ENCODE measurements at regions of chr5 and their contacts with region 1.

Region 1: GRCh38 chr5:174418928-174419796 is 305.2 kb upstream of the MSX2 start:
- DNase-seq: peak; percentile 87 to 93
- ATAC-seq: peak; percentile 82 to 89 (median 84)
- H3K4me3 ChIP-seq: peak overlapping the region; percentile 24
- H3K27ac ChIP-seq: no peak overlapping the region
- H3K4me1 ChIP-seq: peaks cover 8% of the 10 kb centered on the region
- H3K27me3 ChIP-seq: peaks cover 0 to 26% (median 4%) of the 10 kb centered on the region in 3 donors
- CTCF ChIP-seq: peak; percentile 89

Region 2: DNA sequence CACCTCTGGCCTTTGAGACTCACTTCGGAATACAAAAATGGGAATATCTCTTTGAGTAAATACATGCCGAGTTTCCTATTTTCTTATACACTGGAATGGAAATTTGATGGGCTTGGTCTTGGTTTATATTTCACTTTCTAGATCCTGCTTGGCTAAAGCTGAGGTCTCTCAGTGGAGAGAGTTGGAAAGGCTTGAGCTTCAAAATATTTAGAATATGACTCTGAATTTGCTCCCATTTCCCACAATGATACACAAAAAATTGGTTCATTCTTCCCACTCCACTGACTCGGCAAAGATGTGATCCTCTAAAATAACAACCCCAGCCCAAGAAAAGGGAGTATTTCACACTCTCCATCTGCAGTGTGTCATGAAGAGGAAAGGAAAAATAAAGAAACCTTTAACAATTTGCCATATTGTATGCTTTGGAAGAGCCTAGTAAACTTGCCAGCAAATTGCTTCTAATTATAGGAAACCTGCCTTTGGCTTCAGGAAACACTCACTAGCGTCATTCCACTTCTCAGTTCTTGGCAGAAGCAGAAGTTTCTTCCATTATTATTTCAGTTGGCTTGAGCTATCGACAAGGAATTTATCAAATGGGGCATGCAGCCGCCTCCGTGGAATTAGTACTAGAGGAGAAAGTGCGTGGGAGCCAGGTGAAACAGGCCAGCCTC is 70.7 kb before region 1 on chr5:
- intact Hi-C with region 1: no loop called
- DNase-seq: no peak
- ATAC-seq: no peak
- H3K4me3 ChIP-seq: no peak overlapping the region
- H3K27ac ChIP-seq: no peak overlapping the region
- H3K4me1 ChIP-seq: no peaks in the 10 kb centered on the region
- H3K27me3 ChIP-seq: peaks cover 1 to 12% (median 3%) of the 10 kb centered on the region in 3 donors
- CTCF ChIP-seq: no peak

Region 3: GRCh38 chr5:174735498-174736330 is 316.6 kb after region 1 on chr5:
- intact Hi-C with region 1: loop called (anchors 2 to 5 kb)
- DNase-seq: no peak
- ATAC-seq: peak in 3 of 4 donors; percentile 71 to 80 (median 71)
- H3K4me3 ChIP-seq: peak overlapping the region; percentile 39
- H3K27ac ChIP-seq: no peak overlapping the region
- H3K4me1 ChIP-seq: no peaks in the 10 kb centered on the region
- H3K27me3 ChIP-seq: peaks cover 9 to 69% (median 31%) of the 10 kb centered on the region in 3 donors
- CTCF ChIP-seq: peak; percentile 41

Region 4: DNA sequence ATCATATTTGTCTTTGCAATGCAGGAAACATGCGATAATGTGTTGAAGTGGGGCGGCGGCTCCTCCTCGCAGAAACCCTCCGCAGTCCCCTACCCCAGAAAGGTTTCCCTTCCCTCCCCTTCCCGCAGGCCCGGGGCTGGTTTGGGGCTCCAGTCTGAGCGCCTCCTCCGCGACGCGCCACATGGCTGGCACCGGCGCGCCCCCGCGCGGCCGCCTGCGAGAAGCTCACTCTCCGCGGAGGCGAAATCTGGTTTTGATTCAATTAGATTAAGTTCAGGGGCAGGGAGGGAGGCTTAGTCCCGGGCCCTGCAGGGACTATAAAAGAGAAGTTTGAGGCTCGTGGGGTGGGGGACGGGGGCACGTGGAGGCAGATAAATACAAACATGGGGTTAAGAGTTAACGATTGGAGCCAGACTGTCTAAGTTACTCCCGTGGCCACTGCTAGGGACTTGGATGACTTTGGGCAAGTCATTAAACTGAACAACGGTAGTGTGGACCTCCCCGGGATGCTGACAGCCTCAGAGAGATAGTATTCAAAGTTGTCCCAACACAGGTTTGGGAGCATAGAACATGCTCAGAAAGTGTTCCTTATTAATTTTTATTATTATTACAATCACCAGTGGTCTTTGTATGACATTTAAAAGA is 374.6 kb after region 1 on chr5:
- intact Hi-C with region 1: loop called (anchors 2 kb)
- DNase-seq: peak; percentile 45 to 65
- ATAC-seq: peak; percentile 59 to 79 (median 72)
- H3K4me3 ChIP-seq: no peak overlapping the region
- H3K27ac ChIP-seq: no peak overlapping the region
- H3K4me1 ChIP-seq: no peaks in the 10 kb centered on the region
- H3K27me3 ChIP-seq: peaks cover 2 to 15% (median 10%) of the 10 kb centered on the region in 3 donors
- CTCF ChIP-seq: peak; percentile 68